GM12878 (cell line): ENCODE measurements at regions of chr4 and their contacts with region 1.

Region 1: GRCh38 chr4:140523857-140524742 is at the start of gene ELMOD2:
- DNase-seq: peak; percentile 74
- ATAC-seq: peak; percentile 100
- H3K4me3 ChIP-seq: peak within 1 kb of the TSS; percentile 87
- H3K27ac ChIP-seq: peak within 1 kb of the TSS; percentile 75
- H3K4me1 ChIP-seq: no peaks in the 10 kb centered on the region
- H3K27me3 ChIP-seq: no peaks in the 10 kb centered on the region
- CTCF ChIP-seq: peak; percentile 92 to 96 (median 96)
- EP300 ChIP-seq: no peak
- POLR2A ChIP-seq: peak; percentile 94
- RAD21 ChIP-seq: peak; percentile 38
- polyA plus RNA-seq, gene ELMOD2: 6.5 to 7.9 TPM

Region 2: DNA sequence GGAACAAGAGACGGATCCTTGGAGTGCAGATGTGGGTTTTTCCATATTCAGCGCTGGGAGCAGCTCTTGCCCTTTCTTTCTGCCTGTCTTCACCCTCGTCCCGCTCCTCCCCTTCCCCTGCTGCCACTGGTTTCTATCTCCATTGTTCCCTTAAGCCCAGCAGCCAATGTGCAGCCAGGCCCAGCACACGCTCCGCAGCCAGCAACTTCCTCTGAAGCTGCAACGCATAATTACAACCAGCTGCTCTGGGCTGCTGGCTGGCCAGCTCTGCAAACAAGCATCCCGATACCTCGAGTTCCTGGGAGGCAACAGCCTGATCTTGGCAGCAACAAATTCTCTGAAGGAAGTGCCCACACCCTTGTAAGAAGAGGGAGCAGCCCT is 286.5 kb before region 1 on chr4:
- CTCF ChIA-PET with region 1: no interaction called
- POLR2A ChIA-PET with region 1: no interaction called
- RAD21 ChIA-PET with region 1: no interaction called
- SMC1A ChIA-PET with region 1: no interaction called
- in situ Hi-C with region 1: no loop called
- intact Hi-C with region 1: no loop called
- DNase-seq: no peak
- ATAC-seq: no peak
- H3K4me3 ChIP-seq: no peak overlapping the region
- H3K27ac ChIP-seq: no peak overlapping the region
- H3K4me1 ChIP-seq: peaks cover 2% of the 10 kb centered on the region
- H3K27me3 ChIP-seq: peaks cover 4 to 7% of the 10 kb centered on the region in 2 experiments
- CTCF ChIP-seq: no peak
- EP300 ChIP-seq: no peak
- POLR2A ChIP-seq: no peak
- RAD21 ChIP-seq: no peak

Region 3: GRCh38 chr4:140373328-140374129 is 150.6 kb before region 1 on chr4 and contains the start of gene SCOC:
- CTCF ChIA-PET with region 1: interaction called, 7 read pairs
- POLR2A ChIA-PET with region 1: interaction called, 11 read pairs
- RAD21 ChIA-PET with region 1: interaction called, 12 read pairs
- SMC1A ChIA-PET with region 1: interaction called, 4 read pairs
- in situ Hi-C with region 1: loop called (anchors 10 kb)
- intact Hi-C with region 1: loop called (anchors 1 kb)
- DNase-seq: peak; percentile 98
- ATAC-seq: peak; percentile 96
- H3K4me3 ChIP-seq: peak within 1 kb of the TSS; percentile 91
- H3K27ac ChIP-seq: peak within 1 kb of the TSS; percentile 68
- H3K4me1 ChIP-seq: peaks cover 7% of the 10 kb centered on the region
- H3K27me3 ChIP-seq: no peaks in the 10 kb centered on the region
- CTCF ChIP-seq: no peak
- EP300 ChIP-seq: 0 out of 4 replicates have a peak, but pooled peaks of 1 of the 2 experiments have one; percentile 8
- POLR2A ChIP-seq: peak; percentile 89
- RAD21 ChIP-seq: no peak
- polyA plus RNA-seq, gene SCOC: 118 to 154 TPM

Region 4: GRCh38 chr4:140556372-140557085 is 32.4 kb after region 1 on chr4:
- CTCF ChIA-PET with region 1: interaction called, 23 read pairs
- POLR2A ChIA-PET with region 1: interaction called, 9 read pairs
- RAD21 ChIA-PET with region 1: interaction called, 5 read pairs
- SMC1A ChIA-PET with region 1: interaction called, 11 read pairs
- in situ Hi-C with region 1: no loop called
- intact Hi-C with region 1: no loop called
- DNase-seq: peak; percentile 64
- ATAC-seq: peak; percentile 99
- H3K4me3 ChIP-seq: peak overlapping the region; percentile 2; the same call in 1 of the 2 replicates
- H3K27ac ChIP-seq: no peak overlapping the region
- H3K4me1 ChIP-seq: peaks cover 10% of the 10 kb centered on the region
- H3K27me3 ChIP-seq: no peaks in the 10 kb centered on the region
- CTCF ChIP-seq: no peak
- EP300 ChIP-seq: peak in 1 of 2 experiments; percentile 61; a peak in 3 of 4 replicates
- POLR2A ChIP-seq: no peak
- RAD21 ChIP-seq: no peak

Region 5: DNA sequence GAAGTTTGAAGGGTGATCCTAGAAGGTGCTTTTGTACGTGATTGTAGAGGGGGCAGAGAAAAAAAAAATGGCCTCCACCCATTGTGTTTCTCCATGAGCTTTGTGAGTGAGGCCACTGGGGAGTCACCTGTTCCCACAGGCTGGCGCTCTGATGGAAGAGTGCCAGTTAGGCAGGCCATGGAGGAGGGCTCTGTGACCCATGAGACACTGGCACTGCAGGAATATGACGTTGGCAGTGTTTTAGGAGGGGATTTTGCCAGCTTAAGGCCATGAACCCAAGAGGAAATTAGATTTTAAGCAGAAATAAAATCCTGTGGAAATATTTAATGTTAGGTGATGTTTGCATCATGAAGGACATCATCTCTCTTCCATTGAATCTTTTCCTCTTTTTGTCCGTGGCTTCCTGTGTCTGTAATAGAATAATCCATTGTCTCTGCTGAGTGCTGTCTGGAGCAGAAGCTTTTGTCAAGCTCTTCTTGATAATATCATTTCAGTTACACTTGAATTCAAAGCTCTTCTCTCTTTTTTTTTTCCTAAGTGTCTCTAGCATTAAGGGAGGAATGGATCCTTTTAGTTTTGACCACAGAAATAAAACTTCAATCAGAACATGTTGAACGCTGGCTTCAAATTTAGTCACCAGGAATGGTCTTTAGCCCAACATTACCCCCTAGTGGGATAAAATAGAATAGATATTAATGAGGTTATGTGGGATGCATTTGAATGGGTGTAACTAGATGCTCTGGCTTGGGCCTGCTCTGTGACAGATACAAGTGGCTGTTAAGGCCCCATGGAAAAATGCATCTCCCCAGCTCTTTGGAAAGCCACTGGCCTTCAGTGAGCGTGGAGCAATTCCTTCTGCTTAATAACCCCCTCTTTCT is 85.7 kb after region 1 on chr4:
- CTCF ChIA-PET with region 1: interaction called, 19 read pairs
- POLR2A ChIA-PET with region 1: no interaction called
- RAD21 ChIA-PET with region 1: interaction called, 4 read pairs
- SMC1A ChIA-PET with region 1: interaction called, 9 read pairs
- in situ Hi-C with region 1: no loop called
- intact Hi-C with region 1: loop called (anchors 1 kb)
- DNase-seq: peak; percentile 19
- ATAC-seq: peak; percentile 91
- H3K4me3 ChIP-seq: no peak overlapping the region
- H3K27ac ChIP-seq: no peak overlapping the region
- H3K4me1 ChIP-seq: no peaks in the 10 kb centered on the region
- H3K27me3 ChIP-seq: no peaks in the 10 kb centered on the region
- CTCF ChIP-seq: peak; percentile 39 to 68 (median 52); a peak in 5 of 6 replicates
- EP300 ChIP-seq: no peak
- POLR2A ChIP-seq: no peak
- RAD21 ChIP-seq: peak; percentile 85

Region 6: DNA sequence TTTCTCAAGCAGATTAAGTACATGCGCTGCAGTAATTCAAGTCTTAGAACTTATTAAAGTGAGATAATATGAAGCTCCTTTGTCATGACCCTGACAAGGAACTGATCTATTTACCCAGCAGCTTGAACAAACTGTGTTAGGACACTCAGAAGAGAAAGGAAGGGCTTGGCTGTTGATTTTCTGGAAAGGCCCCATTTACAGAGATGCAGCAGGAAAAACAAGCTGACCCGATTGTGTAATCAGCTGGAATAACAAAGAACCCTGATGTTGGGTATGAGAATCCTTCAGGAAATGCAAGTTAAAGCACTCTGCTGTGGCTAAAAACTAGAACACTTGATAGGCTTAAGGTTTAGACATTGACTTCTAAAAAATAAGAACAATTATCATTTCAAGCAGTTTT is 167.3 kb after region 1 on chr4:
- CTCF ChIA-PET with region 1: no interaction called
- POLR2A ChIA-PET with region 1: no interaction called
- RAD21 ChIA-PET with region 1: no interaction called
- SMC1A ChIA-PET with region 1: no interaction called
- in situ Hi-C with region 1: no loop called
- intact Hi-C with region 1: no loop called
- DNase-seq: no peak
- ATAC-seq: no peak
- H3K4me3 ChIP-seq: no peak overlapping the region
- H3K27ac ChIP-seq: no peak overlapping the region
- H3K4me1 ChIP-seq: no peaks in the 10 kb centered on the region
- H3K27me3 ChIP-seq: no peaks in the 10 kb centered on the region
- CTCF ChIP-seq: no peak
- EP300 ChIP-seq: no peak
- POLR2A ChIP-seq: no peak
- RAD21 ChIP-seq: no peak